Right cardiac atrium (tissue), 5 donors: ENCODE measurements at regions of chr5 and their contacts with region 1.

Region 1: DNA sequence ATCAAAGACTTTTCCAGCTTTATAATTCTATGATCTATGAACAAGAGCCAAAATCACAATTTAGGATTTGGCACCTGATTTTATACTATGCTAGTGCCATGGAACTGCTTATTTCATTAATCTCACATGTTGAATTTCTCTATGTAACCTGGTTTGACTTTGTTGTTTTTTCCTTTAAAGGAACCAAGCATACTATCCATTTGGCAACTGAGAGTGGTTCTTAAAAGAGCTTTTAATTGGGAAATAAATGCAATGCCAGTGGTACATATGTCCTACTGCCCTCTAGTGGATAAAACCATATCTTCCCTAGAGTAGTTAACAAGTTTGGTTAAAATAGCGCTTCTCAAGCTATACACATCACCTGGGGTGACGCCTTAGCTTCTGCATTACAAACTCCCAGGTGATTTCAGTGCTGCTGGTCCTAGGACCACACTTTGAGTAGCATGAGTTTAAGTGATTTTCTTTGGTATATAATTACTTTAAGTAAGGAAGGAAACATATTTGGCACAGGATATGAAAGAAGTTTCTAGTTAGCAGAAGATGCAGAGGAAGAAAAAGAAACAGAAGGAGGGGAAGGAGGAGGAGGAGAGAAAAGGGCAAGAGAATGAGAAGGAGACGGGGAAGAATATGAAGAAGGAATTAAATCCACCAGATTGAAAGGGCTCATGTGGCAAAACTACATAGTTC is 56.8 kb downstream of the FGF10 start:
- DNase-seq: no peak
- ATAC-seq: peak; percentile 44 to 57
- H3K4me3 ChIP-seq: no peak overlapping the region
- H3K27ac ChIP-seq: no peak overlapping the region
- H3K4me1 ChIP-seq: no peaks in the 10 kb centered on the region
- H3K27me3 ChIP-seq: no peaks in the 10 kb centered on the region

Region 2: DNA sequence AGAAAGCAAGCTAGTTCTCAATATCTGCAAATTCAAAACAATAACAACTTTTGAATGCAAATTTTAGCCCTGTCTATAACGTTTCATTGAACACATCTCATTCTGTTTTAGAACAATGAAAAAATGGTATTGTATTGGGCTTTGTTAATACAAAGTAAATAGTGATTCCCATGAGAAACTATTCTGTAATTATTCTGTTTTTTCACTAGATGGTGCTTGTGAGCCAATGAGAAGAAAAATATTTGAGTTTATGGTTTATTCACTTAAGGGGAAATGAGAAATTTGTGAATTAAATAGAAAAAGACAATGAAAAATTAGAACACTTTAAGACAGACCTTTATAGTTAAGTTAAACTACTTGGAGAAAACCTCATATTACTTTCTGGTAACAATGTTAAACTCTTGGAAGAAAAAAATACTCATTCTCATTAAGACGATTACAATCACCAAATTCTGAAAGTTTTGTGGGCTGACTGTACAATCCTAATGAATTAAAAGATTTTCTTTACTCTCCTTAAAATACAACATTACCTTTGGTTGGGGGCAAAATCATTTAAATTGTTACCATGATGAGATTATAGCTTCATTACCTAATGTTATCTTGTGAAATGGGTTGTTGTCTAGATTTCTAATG is 602.5 kb before region 1 on chr5:
- intact Hi-C with region 1: loop called (anchors 2 to 5 kb)
- DNase-seq: no peak
- ATAC-seq: no peak
- H3K4me3 ChIP-seq: no peak overlapping the region
- H3K27ac ChIP-seq: no peak overlapping the region
- H3K4me1 ChIP-seq: no peaks in the 10 kb centered on the region
- H3K27me3 ChIP-seq: no peaks in the 10 kb centered on the region

Region 3: DNA sequence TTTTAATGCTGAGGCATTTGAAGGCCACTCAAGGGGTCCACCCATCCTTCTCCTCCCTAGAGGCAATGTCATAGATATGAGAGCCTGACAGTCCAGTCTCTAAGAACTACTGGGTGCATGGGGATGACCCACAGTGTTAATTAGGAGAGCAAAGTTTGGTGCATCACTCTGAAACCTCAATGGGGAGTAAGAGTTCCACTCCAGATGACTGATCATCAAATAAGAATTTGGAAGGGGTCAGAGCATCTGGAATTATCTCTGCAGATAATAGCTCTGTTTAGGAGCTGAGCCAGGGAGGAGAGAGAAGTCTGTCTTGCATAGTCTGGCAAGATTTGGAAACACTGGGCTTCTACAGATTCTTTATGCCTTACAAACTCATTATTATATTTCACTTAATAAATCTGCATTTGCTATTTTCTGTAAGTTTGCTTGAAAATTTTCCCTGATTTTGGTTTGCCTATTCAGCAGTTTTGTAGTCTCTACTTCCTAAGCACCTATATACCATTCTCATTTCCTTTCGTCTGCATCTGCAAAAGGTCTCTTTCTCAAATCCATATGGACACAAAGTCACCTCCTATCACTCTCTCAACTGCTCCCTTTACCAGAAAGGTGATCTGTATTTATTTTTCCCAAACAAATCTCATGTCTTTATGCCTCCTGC is 29.0 kb after region 1 on chr5:
- intact Hi-C with region 1: no loop called
- DNase-seq: peak in 1 of 3 donors; percentile 6
- ATAC-seq: no peak
- H3K4me3 ChIP-seq: no peak overlapping the region
- H3K27ac ChIP-seq: no peak overlapping the region
- H3K4me1 ChIP-seq: no peaks in the 10 kb centered on the region
- H3K27me3 ChIP-seq: no peaks in the 10 kb centered on the region